Adrenal gland (tissue), 19 donors: ENCODE measurements at regions of chr1 and their contacts with region 1.

Region 1: DNA sequence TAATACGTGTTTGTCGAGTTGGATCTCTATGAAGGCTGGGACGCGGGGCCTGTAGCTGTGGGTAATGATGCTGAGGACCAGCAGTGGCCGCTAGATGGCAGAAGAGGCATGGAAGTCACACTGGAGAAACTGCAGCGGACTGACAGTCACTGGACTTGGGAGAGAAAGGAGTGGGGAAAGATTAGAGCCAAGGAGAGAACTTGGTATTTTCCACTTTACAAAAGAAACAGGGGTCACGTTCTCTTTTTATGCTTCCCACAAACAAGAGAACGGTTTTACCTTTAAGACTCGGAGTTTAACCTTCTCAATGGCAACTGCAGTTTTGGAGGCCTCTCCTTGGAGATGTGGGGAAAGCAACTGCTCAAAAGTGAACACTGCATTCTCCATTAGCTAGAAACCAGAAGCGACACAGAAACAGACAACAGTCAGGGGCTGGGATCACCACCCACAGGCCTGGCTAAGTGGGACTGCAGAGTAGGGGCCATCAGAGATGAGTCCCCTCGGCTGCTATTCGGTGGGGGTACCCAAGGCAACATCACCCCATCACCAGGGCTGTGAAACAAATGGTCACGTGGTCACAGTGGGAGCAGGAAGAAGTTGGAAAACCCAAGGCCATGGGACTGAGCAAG is 51.1 kb upstream of the EDEM3 start:
- DNase-seq: peak; percentile 87 to 98 (median 93)
- H3K4me3 ChIP-seq: no peak overlapping the region
- H3K27ac ChIP-seq: peak overlapping the region in 1 of 5 donors; percentile 44
- H3K4me1 ChIP-seq: peaks cover 4 to 7% of the 10 kb centered on the region in 2 donors
- H3K27me3 ChIP-seq: no peaks in the 10 kb centered on the region
- CTCF ChIP-seq: peak; percentile 75 to 99 (median 96)
- POLR2A ChIP-seq: no peak

Region 2: DNA sequence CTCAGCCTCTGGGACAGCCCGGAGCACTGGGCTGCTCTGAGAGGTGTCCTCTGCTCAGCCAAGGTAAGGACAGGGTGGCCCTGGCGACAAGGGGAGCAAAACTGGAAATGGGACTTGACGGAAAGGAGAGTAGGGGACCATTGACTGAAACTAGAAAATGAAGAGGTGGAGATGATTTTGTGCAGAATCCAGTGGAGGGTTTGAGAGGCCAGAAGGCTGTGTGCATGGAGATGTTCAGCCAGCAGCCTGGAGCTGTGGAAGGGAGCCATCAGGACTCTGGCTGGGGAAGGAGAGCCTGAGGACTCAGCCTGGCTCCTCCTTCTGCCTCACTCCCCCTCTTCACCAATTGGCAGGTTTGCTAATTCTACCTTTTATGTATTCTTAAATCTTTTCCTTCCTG is 165.3 kb before region 1 on chr1:
- intact Hi-C with region 1: no loop called
- DNase-seq: peak in 1 of 7 donors; percentile 9
- H3K4me3 ChIP-seq: no peak overlapping the region
- H3K27ac ChIP-seq: no peak overlapping the region
- H3K4me1 ChIP-seq: peaks cover 12 to 13% of the 10 kb centered on the region in 2 donors
- H3K27me3 ChIP-seq: no peaks in the 10 kb centered on the region
- CTCF ChIP-seq: no peak
- POLR2A ChIP-seq: no peak

Region 3: DNA sequence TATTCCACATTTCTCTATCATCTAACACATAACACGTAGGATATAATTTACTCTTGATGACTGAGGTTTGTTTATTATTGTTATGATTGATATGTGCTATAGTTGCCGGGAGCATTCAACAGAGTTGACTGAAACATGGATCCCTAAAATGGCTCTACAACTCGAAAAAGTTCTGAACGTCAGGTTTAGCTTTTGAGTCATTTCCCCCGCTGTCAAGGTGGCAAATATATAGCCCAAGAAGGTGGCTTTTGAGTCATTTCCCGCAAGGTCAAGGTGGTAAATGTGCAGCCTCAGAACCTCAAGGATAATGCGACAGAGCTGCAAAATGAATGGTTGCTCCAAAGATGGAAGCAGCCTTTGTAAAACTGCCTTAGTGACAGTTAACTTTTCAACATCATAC is 64.5 kb after region 1 on chr1:
- intact Hi-C with region 1: no loop called
- DNase-seq: no peak
- H3K4me3 ChIP-seq: no peak overlapping the region
- H3K27ac ChIP-seq: no peak overlapping the region
- H3K4me1 ChIP-seq: peaks cover 0 to 6% of the 10 kb centered on the region in 2 donors
- H3K27me3 ChIP-seq: no peaks in the 10 kb centered on the region
- CTCF ChIP-seq: no peak
- POLR2A ChIP-seq: no peak

Region 4: DNA sequence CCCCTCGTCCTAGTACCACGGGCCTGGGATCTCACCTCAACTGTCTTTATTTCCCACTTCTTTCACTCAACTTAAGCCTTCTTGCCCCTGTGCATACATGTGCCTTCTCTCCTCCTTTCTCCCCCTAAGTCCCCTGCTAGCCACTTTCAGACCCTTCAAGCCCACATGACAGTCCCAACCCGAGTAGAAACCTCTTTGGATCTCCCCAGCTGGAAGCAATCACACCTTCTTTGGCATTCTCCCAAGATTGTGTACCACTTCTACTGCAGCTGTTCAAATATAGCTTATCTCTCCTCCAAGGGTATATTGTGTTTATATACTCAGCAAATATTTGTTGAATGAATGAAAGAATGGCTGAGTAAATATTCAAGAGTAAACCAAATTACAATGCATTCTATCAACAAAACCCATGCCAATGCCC is 99.7 kb after region 1 on chr1:
- intact Hi-C with region 1: no loop called
- DNase-seq: no peak
- H3K4me3 ChIP-seq: no peak overlapping the region
- H3K27ac ChIP-seq: no peak overlapping the region
- H3K4me1 ChIP-seq: peaks cover 2 to 4% of the 10 kb centered on the region in 2 donors
- H3K27me3 ChIP-seq: no peaks in the 10 kb centered on the region
- CTCF ChIP-seq: no peak
- POLR2A ChIP-seq: no peak

Region 5: DNA sequence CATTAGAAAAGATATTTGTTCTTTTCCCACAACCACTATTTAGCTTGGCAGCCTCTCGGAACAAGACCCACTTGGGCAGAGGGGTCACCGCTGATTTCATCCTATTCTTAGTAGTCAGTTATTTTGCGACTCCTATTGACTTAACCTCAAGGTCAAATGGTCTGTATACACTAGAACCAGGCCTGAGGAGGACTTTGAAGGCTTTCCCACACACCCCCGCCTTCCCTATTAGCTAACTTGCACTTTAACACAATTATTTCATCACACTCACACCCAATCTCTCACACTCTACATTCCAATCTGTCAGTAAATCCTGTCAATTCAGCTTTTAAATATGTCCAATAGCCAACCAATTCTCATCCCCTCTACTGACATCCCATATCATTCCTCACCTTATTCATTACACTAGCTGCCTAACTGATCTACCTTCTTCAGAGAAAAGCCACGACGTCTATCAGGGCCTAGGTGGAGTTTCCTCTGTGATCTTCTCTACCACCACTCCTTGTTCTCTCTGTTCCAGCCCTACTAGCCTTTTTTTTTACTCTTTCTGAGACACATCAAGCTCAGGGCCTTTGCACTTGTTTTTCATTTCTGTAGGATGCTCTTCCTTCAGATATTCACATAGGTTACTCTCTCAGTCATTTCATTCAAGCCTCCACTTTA is 169.6 kb after region 1 on chr1:
- intact Hi-C with region 1: loop called in 1 of 2 experiments (anchors 5 kb)
- DNase-seq: no peak
- H3K4me3 ChIP-seq: no peak overlapping the region
- H3K27ac ChIP-seq: no peak overlapping the region
- H3K4me1 ChIP-seq: peaks cover 0 to 7% of the 10 kb centered on the region in 2 donors
- H3K27me3 ChIP-seq: no peaks in the 10 kb centered on the region
- CTCF ChIP-seq: no peak
- POLR2A ChIP-seq: no peak

Region 6: GRCh38 chr1:185156854-185157598 is 351.2 kb after region 1 on chr1 and contains the starts of genes SWT1 and TRMT1L:
- intact Hi-C with region 1: loop called in 1 of 2 experiments (anchors 10 kb)
- DNase-seq: peak; percentile 99 to 100 (median 100)
- H3K4me3 ChIP-seq: peak within 1 kb of the TSS; percentile 91 to 98 (median 94)
- H3K27ac ChIP-seq: peak within 1 kb of the TSS; percentile 98 to 100 (median 99)
- H3K4me1 ChIP-seq: peaks cover 13 to 43% of the 10 kb centered on the region in 2 donors
- H3K27me3 ChIP-seq: no peaks in the 10 kb centered on the region
- CTCF ChIP-seq: no peak
- POLR2A ChIP-seq: peak; percentile 96 to 99
- total RNA-seq, gene SWT1: 2.9 to 11.0 (median 6.3) TPM
- total RNA-seq, gene TRMT1L: 13.6 to 30.4 (median 24.1) TPM